Right cardiac atrium (tissue), 5 donors: ENCODE measurements at regions of chr3 and their contacts with region 1.

Region 1: DNA sequence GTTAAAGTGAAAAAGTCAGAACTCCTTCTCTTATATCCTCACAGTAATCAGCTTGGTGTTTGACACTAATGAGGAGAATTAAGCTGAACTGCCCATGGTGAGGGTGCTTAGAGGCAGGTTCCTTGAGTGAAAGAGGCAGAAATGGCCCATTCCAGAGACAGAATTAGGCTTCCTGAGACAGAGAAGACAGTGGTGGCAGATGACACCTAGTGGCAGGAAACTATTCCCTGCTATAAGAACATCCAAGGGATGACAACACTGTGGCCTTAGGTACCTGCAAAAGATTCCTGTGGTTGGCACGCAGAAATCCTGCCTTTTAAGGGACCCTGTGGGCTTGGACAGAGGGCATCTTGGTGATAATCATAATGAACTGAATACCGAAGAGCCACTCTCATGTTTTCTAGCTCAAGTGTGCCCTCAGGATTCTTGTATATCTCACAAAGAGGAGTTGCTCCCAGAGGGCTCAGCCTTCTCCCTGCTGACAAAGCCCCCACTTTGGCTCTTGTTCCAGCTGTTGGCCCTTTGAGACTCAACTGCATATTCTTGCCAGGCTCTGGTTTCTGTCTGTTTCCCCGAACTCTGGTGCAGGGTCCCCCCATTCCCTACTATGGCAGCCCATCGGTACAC is 56.0 kb downstream of the KBTBD12 start:
- DNase-seq: no peak
- ATAC-seq: peak; percentile 78 to 80
- H3K4me3 ChIP-seq: no peak overlapping the region
- H3K27ac ChIP-seq: no peak overlapping the region
- H3K4me1 ChIP-seq: no peaks in the 10 kb centered on the region
- H3K27me3 ChIP-seq: no peaks in the 10 kb centered on the region

Region 2: DNA sequence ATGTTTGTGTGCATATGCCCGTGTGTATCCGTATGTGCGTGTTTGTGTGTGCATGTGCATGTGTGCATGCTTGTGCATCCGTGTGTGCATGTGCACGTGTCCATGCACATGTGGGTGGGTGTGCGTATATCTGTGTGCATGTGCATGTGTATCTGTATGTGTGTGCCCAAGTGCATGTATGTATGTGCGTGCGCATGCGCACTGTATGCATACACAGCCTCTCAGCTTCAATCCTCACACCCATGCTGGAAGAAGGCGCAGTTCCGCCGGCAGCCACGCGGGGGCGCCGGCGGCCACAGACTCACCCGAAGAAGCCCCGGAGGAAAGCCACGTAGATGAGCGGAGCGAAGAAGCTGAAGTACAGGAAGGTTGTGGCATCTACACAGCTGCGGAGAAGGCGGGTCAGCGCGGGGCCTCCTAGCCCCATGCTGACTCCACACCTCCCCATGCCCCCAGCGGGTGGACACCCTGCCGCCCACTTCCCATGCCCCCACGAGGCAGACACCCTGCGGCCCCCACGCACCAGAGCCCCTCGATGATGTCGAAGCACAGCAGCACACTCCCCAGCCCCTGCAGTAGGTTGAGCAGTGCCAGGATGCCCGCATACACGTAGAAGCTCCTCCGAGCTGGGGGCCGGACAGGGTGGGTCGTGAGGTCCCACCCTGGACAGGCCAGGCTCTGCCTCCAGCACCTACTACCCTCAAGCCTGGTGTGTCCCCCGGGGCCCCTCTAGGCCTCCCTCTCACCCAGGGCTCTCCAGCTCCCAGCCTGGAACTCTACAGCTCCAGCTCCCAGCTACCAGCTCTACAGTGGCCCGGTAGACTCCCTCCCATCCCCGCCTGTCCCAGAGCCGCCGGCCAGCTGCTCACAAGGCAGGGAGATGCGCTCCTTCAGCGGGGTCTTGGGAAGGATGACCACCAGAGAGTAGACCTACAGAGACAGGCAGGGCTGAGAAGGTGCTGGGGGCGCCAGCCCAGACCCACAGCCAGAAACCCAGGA is 395.9 kb before region 1 on chr3:
- intact Hi-C with region 1: loop called in 1 of 4 experiments (anchors 10 kb)
- DNase-seq: peak; percentile 83 to 94 (median 93)
- ATAC-seq: peak; percentile 80 to 81
- H3K4me3 ChIP-seq: no peak overlapping the region
- H3K27ac ChIP-seq: no peak overlapping the region
- H3K4me1 ChIP-seq: no peaks in the 10 kb centered on the region
- H3K27me3 ChIP-seq: no peaks in the 10 kb centered on the region

Region 3: GRCh38 chr3:127652231-127652995 is 318.7 kb before region 1 on chr3:
- intact Hi-C with region 1: loop called (anchors 5 kb)
- DNase-seq: peak in 2 of 3 donors; percentile 75 to 79
- ATAC-seq: peak; percentile 84 to 88
- H3K4me3 ChIP-seq: no peak overlapping the region
- H3K27ac ChIP-seq: no peak overlapping the region
- H3K4me1 ChIP-seq: no peaks in the 10 kb centered on the region
- H3K27me3 ChIP-seq: no peaks in the 10 kb centered on the region

Region 4: GRCh38 chr3:127803619-127804018 is 167.5 kb before region 1 on chr3:
- intact Hi-C with region 1: no loop called
- DNase-seq: no peak
- ATAC-seq: no peak
- H3K4me3 ChIP-seq: no peak overlapping the region
- H3K27ac ChIP-seq: no peak overlapping the region
- H3K4me1 ChIP-seq: peaks cover 9% of the 10 kb centered on the region
- H3K27me3 ChIP-seq: no peaks in the 10 kb centered on the region